ENCODE measurements at regions of chr12 and their contacts with region 1.

Region 1: DNA sequence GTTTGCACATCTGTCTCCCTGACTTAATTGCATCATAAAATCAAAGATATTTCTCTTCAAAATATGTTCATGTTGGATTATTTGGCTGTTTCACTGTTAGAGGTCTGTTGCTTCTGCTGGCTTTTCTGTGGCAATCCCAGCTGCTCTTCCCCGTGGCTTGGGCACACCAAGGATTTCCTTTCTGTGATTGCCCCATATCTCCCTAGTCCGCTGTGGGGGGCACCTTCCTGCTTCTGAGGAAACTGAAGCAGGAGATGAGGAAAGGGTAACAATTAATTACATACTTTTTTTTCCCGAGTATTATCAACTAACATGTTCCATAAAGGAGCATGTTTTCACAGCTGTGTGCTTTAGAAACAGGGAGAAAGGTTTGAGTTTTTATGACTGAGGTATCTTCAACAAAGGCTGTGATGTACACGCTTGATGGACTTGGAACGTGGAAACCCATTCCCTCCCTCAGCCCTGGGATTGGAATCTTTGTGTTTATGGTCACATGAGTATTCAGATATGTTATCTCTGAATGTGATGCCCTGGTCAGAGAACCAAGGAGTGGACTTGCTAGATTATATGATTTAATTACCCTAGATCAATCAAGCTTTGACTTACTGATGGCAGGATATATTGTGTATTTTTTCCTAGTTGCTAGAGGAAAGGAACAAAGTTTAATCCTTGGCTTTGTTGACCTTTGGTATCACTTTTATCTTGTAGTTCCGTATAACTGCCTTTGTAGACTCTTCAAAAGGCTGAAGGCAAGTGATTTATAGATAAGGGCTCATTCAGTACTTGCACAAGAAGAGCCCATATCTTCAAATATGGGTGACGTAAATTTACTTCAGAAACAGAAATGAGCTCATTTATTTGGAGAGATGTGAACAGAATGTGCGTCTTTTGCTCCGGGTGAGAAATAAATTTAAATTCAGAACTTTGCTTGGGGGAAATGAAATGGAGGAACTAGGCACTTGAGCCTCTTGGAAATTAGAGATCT is 46.7 kb downstream of the BORCS5 start:
- DNase-seq: peak; percentile 96 to 97
- H3K4me3 ChIP-seq: no peak overlapping the region
- H3K4me3 Mint-ChIP-seq: peak overlapping the region; percentile 54
- H3K27ac Mint-ChIP-seq: peak overlapping the region; percentile 94
- H3K4me1 ChIP-seq: peaks cover 61% of the 10 kb centered on the region
- H3K4me1 Mint-ChIP-seq: peaks cover 60% of the 10 kb centered on the region
- H3K27me3 ChIP-seq: no peaks in the 10 kb centered on the region
- H3K27me3 Mint-ChIP-seq: no peaks in the 10 kb centered on the region
- CTCF ChIP-seq: no peak

Region 2: DNA sequence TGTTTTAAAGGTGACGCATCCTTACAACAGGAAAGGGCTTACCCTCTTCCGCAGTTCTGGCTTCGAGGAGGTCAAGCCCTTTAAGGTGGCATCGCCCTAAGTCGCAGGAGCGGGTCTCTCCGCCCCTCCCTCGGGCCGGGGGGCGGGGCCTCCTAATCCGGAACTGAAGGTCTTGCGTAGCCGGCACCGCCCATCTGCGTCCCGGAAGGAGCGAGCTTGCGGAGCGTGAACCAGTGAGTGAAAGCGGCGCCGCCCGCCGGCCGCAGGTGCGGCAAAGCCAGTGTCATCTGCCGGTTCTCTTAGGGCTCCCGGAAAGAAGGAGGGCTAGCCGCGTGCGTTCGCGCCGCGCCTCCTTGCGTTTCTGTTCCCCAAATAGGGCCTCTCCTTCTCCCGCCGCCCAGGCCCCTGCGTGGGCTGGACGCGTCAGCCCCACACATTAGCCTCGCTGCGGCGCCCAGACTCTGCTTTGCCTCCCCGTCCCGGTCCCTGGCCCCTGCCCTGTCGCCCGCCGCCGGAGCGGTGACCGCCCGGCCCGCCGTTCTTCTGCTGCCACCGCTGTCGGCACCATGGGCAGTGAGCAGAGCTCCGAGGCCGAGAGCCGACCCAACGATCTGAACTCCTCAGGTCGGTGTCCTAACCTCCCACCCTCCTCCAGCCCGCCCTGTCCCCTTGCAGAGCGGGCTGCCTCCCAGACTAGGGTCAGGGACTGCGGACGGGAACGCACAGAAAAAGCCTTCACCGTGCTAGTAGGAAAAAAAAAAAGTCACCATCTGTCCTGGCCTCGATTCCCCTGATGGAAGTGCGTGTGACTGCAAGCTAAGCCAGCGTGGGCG is 46.5 kb before region 1 on chr12 and contains the start of gene BORCS5:
- CTCF ChIA-PET with region 1: interaction called, 3 read pairs
- POLR2A ChIA-PET with region 1: interaction called, 15 read pairs
- intact Hi-C with region 1: loop called (anchors 2 kb)
- DNase-seq: peak; percentile 99
- H3K4me3 ChIP-seq: peak within 1 kb of the TSS; percentile 86
- H3K4me3 Mint-ChIP-seq: peak within 1 kb of the TSS; percentile 94
- H3K27ac Mint-ChIP-seq: peak within 1 kb of the TSS; percentile 96
- H3K4me1 ChIP-seq: peaks cover 7% of the 10 kb centered on the region; the same call in 1 of the 2 replicates
- H3K4me1 Mint-ChIP-seq: peaks cover 12% of the 10 kb centered on the region
- H3K27me3 ChIP-seq: no peaks in the 10 kb centered on the region
- H3K27me3 Mint-ChIP-seq: no peaks in the 10 kb centered on the region
- CTCF ChIP-seq: peak in 1 of 2 experiments; percentile 43
- total RNA-seq, gene BORCS5: 25.5 and 25.7 TPM in 2 replicates

Region 3: GRCh38 chr12:12384571-12385340 is 18.8 kb before region 1 on chr12:
- CTCF ChIA-PET with region 1: interaction called, 9 read pairs
- POLR2A ChIA-PET with region 1: interaction called, 14 read pairs
- intact Hi-C with region 1: loop called (anchors 2 kb)
- DNase-seq: peak; percentile 50 to 84
- H3K4me3 ChIP-seq: no peak overlapping the region
- H3K4me3 Mint-ChIP-seq: peak overlapping the region; percentile 30
- H3K27ac Mint-ChIP-seq: peak overlapping the region; percentile 75
- H3K4me1 ChIP-seq: peaks cover 56% of the 10 kb centered on the region
- H3K4me1 Mint-ChIP-seq: peaks cover 59% of the 10 kb centered on the region
- H3K27me3 ChIP-seq: no peaks in the 10 kb centered on the region
- H3K27me3 Mint-ChIP-seq: no peaks in the 10 kb centered on the region
- CTCF ChIP-seq: no peak

Region 4: DNA sequence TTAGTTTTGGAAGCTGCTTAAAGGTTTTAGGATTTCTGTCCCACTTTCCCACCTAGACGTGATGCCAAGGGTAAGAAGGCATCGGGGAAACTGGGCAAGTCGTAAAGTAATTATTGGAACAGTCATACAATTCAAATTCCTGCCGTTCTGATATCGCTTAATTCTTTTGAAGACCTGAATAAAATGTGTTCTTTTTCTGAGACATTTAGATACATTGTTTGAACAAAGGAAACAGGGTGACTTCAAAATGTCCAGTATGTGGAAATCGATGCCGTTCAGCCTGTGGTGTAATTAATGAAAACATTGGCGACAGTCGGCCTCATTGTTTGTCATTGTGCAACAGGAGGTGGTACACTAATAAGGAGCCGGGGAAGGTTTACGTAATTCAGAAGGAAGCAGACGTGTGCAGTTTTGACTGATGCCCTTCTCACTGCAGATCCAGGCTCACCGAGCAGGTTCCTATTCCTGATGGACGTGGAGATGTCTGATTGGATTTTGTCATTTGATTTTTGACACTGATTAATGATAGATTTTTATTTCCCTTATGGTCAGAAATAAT is 46.0 kb after region 1 on chr12:
- CTCF ChIA-PET with region 1: no interaction called
- POLR2A ChIA-PET with region 1: interaction called, 3 read pairs
- intact Hi-C with region 1: loop called (anchors 1 kb)
- DNase-seq: peak; percentile 67 to 69
- H3K4me3 ChIP-seq: no peak overlapping the region
- H3K4me3 Mint-ChIP-seq: no peak overlapping the region
- H3K27ac Mint-ChIP-seq: peak overlapping the region; percentile 34
- H3K4me1 ChIP-seq: peaks cover 25% of the 10 kb centered on the region
- H3K4me1 Mint-ChIP-seq: peaks cover 26% of the 10 kb centered on the region
- H3K27me3 ChIP-seq: no peaks in the 10 kb centered on the region
- H3K27me3 Mint-ChIP-seq: no peaks in the 10 kb centered on the region
- CTCF ChIP-seq: no peak

Region 5: GRCh38 chr12:12696562-12697383 is 293.2 kb after region 1 on chr12:
- CTCF ChIA-PET with region 1: no interaction called
- POLR2A ChIA-PET with region 1: no interaction called
- intact Hi-C with region 1: loop called (anchors 1 kb)
- DNase-seq: peak; percentile 91 to 93
- H3K4me3 ChIP-seq: peak overlapping the region; percentile 72
- H3K4me3 Mint-ChIP-seq: peak overlapping the region; percentile 79
- H3K27ac Mint-ChIP-seq: peak overlapping the region; percentile 90
- H3K4me1 ChIP-seq: peaks cover 14% of the 10 kb centered on the region
- H3K4me1 Mint-ChIP-seq: peaks cover 16% of the 10 kb centered on the region
- H3K27me3 ChIP-seq: no peaks in the 10 kb centered on the region
- H3K27me3 Mint-ChIP-seq: no peaks in the 10 kb centered on the region
- CTCF ChIP-seq: no peak

Measured in Caco-2 (cell line).